ENCODE measurements at regions of chr7 and their contacts with region 1.

Region 1: GRCh38 chr7:131040467-131040932 is 287.2 kb upstream of the MKLN1 start:
- DNase-seq: peak; percentile 60
- ATAC-seq: peak; percentile 77
- H3K4me3 Mint-ChIP-seq: no peak overlapping the region
- H3K27ac Mint-ChIP-seq: peak overlapping the region; percentile 73
- H3K4me1 Mint-ChIP-seq: peaks cover 25% of the 10 kb centered on the region
- H3K27me3 Mint-ChIP-seq: no peaks in the 10 kb centered on the region
- CTCF ChIP-seq: peak; percentile 63

Region 2: GRCh38 chr7:130831817-130832481 is 208.6 kb before region 1 on chr7:
- CTCF ChIA-PET with region 1: no interaction called
- POLR2A ChIA-PET with region 1: no interaction called
- DNase-seq: no peak
- ATAC-seq: no peak
- H3K4me3 Mint-ChIP-seq: no peak overlapping the region
- H3K27ac Mint-ChIP-seq: no peak overlapping the region
- H3K4me1 Mint-ChIP-seq: peaks cover 2% of the 10 kb centered on the region; the same call in 1 of the 2 replicates
- H3K27me3 Mint-ChIP-seq: no peaks in the 10 kb centered on the region; the same call in 1 of the 2 replicates
- CTCF ChIP-seq: peak; percentile 62; the same call in 1 of the 2 replicates

Region 3: GRCh38 chr7:130875265-130875741 is 165.2 kb before region 1 on chr7:
- CTCF ChIA-PET with region 1: interaction called, 12 read pairs
- POLR2A ChIA-PET with region 1: no interaction called
- DNase-seq: peak; percentile 88
- ATAC-seq: peak; percentile 88
- H3K4me3 Mint-ChIP-seq: no peak overlapping the region
- H3K27ac Mint-ChIP-seq: no peak overlapping the region; the same call in 1 of the 2 replicates
- H3K4me1 Mint-ChIP-seq: peaks cover 38% of the 10 kb centered on the region
- H3K27me3 Mint-ChIP-seq: no peaks in the 10 kb centered on the region; the same call in 1 of the 2 replicates
- CTCF ChIP-seq: peak; percentile 95

Region 4: DNA sequence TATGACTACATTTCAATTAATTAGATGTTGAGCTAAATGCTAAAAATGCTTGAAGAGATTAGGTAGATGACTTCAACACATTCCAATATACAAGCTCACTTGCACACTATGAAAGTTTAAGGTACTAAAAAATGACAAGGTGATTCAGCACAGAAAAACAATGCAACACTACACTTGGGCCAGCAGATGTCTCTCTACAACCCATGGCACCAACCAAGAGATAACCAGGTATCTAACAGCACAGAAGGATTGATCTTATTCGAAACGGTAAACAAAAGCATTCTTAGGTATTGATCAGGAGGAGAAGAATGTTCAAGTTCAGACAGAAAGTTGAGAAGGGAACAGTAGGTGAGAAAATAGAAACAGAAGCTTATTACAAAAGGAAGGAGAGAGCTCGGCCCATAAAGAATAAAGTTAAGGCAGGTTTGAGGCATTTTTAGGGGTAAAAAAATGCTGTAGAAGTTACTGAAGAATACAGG is 58.3 kb before region 1 on chr7:
- CTCF ChIA-PET with region 1: interaction called, 13 read pairs
- POLR2A ChIA-PET with region 1: interaction called, 10 read pairs
- DNase-seq: no peak
- ATAC-seq: peak; percentile 93
- H3K4me3 Mint-ChIP-seq: no peak overlapping the region
- H3K27ac Mint-ChIP-seq: no peak overlapping the region
- H3K4me1 Mint-ChIP-seq: peaks cover 4% of the 10 kb centered on the region; the same call in 1 of the 2 replicates
- H3K27me3 Mint-ChIP-seq: no peaks in the 10 kb centered on the region
- CTCF ChIP-seq: no peak

Region 5: DNA sequence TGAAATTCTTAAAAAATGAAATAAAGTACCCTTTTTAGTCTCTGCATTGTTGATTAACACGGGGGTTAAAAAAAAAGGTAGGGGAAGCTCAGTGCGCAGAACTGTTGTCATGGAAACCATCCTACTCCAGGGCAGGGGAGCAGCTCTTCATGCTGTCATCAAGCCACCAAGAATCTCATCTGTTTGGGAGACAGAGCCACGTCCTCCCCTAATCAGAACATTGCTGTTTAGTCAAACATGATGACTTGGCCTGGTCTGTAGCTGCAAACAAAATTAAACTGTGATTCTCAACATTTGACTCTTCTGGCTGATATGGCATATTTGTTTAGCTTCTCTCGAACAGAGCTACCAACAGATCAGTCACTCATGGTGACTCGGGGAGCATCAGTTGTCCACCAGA is 52.1 kb before region 1 on chr7:
- CTCF ChIA-PET with region 1: interaction called, 13 read pairs
- POLR2A ChIA-PET with region 1: interaction called, 10 read pairs
- DNase-seq: no peak
- ATAC-seq: no peak
- H3K4me3 Mint-ChIP-seq: no peak overlapping the region
- H3K27ac Mint-ChIP-seq: no peak overlapping the region; the same call in 1 of the 2 replicates
- H3K4me1 Mint-ChIP-seq: no peaks in the 10 kb centered on the region
- H3K27me3 Mint-ChIP-seq: no peaks in the 10 kb centered on the region
- CTCF ChIP-seq: no peak

Region 6: GRCh38 chr7:131164025-131164899 is 123.8 kb after region 1 on chr7:
- CTCF ChIA-PET with region 1: no interaction called
- POLR2A ChIA-PET with region 1: no interaction called
- DNase-seq: no peak
- ATAC-seq: no peak
- H3K4me3 Mint-ChIP-seq: no peak overlapping the region
- H3K27ac Mint-ChIP-seq: peak overlapping the region; percentile 0; the same call in 1 of the 2 replicates
- H3K4me1 Mint-ChIP-seq: peaks cover 16% of the 10 kb centered on the region
- H3K27me3 Mint-ChIP-seq: no peaks in the 10 kb centered on the region
- CTCF ChIP-seq: no peak

Measured in WTC11 (cell line).